Lower leg skin (tissue), 4 donors: ENCODE measurements at regions of chr2 and their contacts with region 1.

Region 1: GRCh38 chr2:196344397-196344796 is 173.0 kb upstream of the STK17B start:
- DNase-seq: no peak
- H3K4me3 ChIP-seq: no peak overlapping the region
- CTCF ChIP-seq: no peak
- POLR2A ChIP-seq: no peak

Region 2: GRCh38 chr2:196318517-196319377 is 25.6 kb before region 1 on chr2:
- intact Hi-C with region 1: loop called (anchors 1 kb)
- DNase-seq: no peak
- H3K4me3 ChIP-seq: no peak overlapping the region
- CTCF ChIP-seq: no peak
- POLR2A ChIP-seq: no peak

Region 3: DNA sequence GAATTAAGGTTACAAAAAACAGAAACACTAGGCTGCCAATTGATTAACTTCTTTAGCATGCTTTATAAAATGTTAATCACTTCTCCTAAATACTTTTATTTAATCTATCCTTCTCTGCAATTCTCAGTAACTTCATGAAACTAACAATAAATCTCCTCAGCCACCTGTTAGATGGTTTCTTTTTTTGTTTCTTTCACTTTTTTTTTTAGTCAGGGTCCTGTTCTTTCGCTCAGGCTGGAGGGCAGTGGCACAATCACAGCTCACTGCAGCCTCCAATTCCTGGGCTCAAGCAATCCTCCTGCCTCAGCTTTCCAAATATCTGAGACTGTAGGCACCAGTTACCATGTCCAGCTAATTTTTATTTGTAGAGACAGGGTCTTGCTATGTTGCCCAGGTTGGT is 40.3 kb after region 1 on chr2:
- intact Hi-C with region 1: no loop called
- DNase-seq: no peak
- H3K4me3 ChIP-seq: no peak overlapping the region
- CTCF ChIP-seq: no peak
- POLR2A ChIP-seq: no peak